Posterior vena cava (tissue), 2 donors: ENCODE measurements at regions of chr3 and their contacts with region 1.

Region 1: DNA sequence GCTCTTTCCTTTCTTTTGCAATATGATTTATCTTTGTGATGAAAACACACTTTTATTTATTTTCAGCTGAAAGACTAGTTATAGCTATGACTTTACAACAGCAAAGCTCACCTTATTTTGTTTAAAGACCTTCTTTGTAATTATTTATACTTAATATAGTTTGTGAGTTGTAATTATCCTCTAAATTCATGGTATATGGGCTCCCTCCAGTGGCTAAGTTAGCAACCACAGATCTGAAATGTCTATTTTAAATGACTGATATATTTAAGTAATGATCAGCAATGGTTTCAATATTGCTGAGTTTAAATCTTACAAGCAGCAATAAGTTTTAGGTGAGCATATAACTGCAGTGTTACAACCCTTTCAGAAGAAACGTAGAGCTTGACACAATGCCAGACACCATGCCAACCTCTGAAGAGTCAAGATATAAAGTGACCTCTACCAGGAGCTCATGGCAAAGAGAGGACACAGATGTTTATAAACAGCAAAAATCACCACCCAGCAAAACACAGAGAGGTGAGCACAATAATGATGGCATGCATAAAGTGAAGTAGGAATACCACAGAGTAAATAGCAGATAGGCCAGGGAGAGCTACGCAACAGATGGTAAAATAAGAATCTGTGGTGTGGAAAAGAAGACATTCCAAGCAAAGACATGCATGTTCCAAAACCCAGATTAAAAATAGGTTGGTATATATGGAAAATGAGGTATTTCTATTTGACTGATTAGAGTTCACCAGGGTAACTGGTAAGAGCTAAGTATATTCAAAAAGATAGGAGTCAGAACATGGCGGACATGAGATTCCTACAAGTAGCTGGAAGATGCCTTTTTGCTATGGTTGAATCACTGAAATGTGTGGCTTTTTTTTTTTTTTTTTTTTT is 143.7 kb upstream of the ZNF385D start:
- DNase-seq: no peak

Region 2: DNA sequence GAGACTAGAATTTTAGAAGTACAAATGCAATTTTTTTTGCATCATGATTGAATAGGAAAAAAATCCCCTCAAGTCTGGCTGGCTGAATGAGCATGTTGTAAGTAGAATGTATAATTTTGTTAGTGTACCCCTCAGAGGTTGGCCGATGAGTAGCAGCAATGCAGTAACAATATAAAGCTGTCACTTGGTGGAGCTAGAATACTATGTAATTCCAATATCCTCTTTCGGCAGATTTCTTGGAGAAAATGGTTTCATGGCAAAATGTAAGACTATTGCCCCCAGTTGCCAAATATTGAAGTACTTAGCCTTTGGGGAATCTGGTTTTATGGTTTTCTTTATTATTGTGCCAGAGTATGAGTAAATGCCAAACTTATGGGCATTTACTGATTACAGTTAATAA is 1668.9 kb before region 1 on chr3:
- intact Hi-C with region 1: loop called (anchors 10 kb)
- DNase-seq: no peak

Region 3: DNA sequence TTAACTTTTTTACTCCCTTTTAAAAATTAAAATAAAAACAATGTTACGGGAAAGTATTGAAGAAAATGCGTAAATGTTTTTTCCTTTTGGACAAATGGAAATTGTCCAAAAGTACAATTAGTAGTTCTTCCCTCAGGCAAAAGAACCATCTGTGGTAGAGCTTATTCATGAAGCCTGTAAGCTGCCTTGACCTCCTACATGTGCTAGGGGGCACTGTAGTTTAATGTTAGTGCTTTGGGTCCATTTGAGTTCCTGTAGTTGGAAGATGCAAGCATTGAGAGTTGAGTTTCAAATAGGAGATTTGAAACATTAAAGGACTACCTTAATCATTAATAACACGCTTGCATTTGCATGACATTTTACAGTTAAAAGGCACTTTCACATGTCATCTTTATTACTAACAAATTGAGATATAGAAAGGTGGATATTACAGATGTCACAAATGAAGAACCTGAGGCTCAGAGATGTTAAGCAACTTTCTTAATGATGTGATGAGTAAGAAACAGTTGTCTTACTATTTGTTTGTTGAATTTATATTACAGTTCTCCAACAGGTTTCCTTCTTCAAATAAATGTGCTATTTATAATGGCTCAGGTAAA is 141.9 kb before region 1 on chr3:
- intact Hi-C with region 1: loop called (anchors 10 kb)
- DNase-seq: no peak

Region 4: GRCh38 chr3:22199095-22199494 is 304.4 kb after region 1 on chr3:
- intact Hi-C with region 1: no loop called
- DNase-seq: no peak